OCI-LY7 (cell line): ENCODE measurements at regions of chr17 and their contacts with region 1.

Region 1: GRCh38 chr17:3845621-3846441 is at the start of gene NCBP3:
- DNase-seq: peak; percentile 96
- H3K4me3 ChIP-seq: peak within 1 kb of the TSS; percentile 94
- H3K27ac ChIP-seq: peak within 1 kb of the TSS; percentile 38
- H3K4me1 ChIP-seq: peaks cover 14% of the 10 kb centered on the region
- CTCF ChIP-seq: peak; percentile 87
- total RNA-seq, gene NCBP3: 24.5 and 56.5 TPM in 2 replicates

Region 2: GRCh38 chr17:3755335-3756030 is 90.3 kb before region 1 on chr17:
- CTCF ChIA-PET with region 1: no interaction called
- POLR2A ChIA-PET with region 1: interaction called, 10 read pairs
- intact Hi-C with region 1: no loop called
- DNase-seq: no peak
- H3K4me3 ChIP-seq: no peak overlapping the region
- H3K27ac ChIP-seq: no peak overlapping the region
- H3K4me1 ChIP-seq: no peaks in the 10 kb centered on the region
- CTCF ChIP-seq: no peak

Region 3: GRCh38 chr17:3870871-3871306 is 25.1 kb after region 1 on chr17:
- CTCF ChIA-PET with region 1: no interaction called
- POLR2A ChIA-PET with region 1: no interaction called
- intact Hi-C with region 1: no loop called
- DNase-seq: no peak
- H3K4me3 ChIP-seq: no peak overlapping the region
- H3K27ac ChIP-seq: no peak overlapping the region
- H3K4me1 ChIP-seq: no peaks in the 10 kb centered on the region
- CTCF ChIP-seq: no peak